ENCODE measurements at regions of chr19 and their contacts with region 1.

Region 1: GRCh38 chr19:37172368-37173366 is at the start of gene ZNF585A:
- DNase-seq: peak; percentile 86 to 97
- ATAC-seq: peak; percentile 98 to 99 (median 99)
- H3K4me3 ChIP-seq: peak within 1 kb of the TSS; percentile 71
- H3K4me3 Mint-ChIP-seq: no peak within 1 kb of the TSS
- H3K27ac ChIP-seq: peak within 1 kb of the TSS; percentile 79
- H3K27ac Mint-ChIP-seq: no peak within 1 kb of the TSS
- H3K4me1 ChIP-seq: peaks cover 2% of the 10 kb centered on the region
- H3K4me1 Mint-ChIP-seq: peaks cover 0 to 4% of the 10 kb centered on the region in 2 donors
- H3K27me3 ChIP-seq: no peaks in the 10 kb centered on the region
- H3K27me3 Mint-ChIP-seq: no peaks in the 10 kb centered on the region
- CTCF ChIP-seq: no peak
- total RNA-seq, gene ZNF585A: 8.9 to 12.6 (median 9.9) TPM

Region 2: DNA sequence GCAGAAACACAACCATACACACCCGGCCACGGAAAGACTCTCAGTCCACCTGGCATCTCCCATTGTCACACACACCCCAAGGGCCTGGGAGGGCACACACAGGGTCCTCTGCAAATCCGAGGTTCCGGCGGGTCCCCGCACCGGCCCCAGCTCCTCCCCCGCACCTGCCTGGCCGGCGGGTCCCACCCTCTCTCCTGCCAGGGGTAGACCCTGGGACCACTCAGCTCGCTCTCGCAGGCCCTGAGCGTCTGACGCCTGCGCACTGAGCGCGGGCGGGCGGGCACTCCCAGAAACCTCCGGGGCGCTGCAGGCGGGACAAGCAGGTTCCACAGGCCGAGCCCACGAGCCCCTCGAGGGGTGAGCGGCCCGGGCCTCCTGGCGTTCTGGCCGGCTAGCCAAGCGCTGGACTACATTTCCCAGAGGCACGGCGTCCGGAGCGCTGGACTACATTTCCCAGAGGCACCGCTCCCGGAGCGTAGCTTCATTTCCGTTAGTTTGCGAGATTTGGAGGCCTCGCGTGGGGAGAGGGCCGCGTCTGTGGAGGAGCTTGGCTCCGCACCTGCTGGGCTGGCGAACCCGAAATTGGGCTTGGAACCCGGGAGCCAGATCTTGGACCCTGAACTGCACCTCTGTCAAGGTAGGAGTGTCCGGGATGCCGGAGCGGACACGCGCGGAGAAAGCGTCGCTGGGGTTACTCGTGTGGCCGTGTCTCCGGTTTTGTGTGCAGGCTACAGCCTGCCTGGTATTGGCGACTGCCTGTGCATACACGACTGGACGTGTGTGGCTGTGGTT is 94.5 kb before region 1 on chr19 and contains the start of gene ZNF420:
- intact Hi-C with region 1: loop called (anchors 1 kb)
- DNase-seq: peak; percentile 82 to 94
- ATAC-seq: peak; percentile 90 to 96 (median 93)
- H3K4me3 ChIP-seq: peak within 1 kb of the TSS; percentile 83
- H3K4me3 Mint-ChIP-seq: peak within 1 kb of the TSS; percentile 100
- H3K27ac ChIP-seq: peak within 1 kb of the TSS; percentile 77
- H3K27ac Mint-ChIP-seq: peak within 1 kb of the TSS; percentile 96 to 97
- H3K4me1 ChIP-seq: peaks cover 8% of the 10 kb centered on the region
- H3K4me1 Mint-ChIP-seq: peaks cover 32 to 37% of the 10 kb centered on the region in 2 donors
- H3K27me3 ChIP-seq: no peaks in the 10 kb centered on the region
- H3K27me3 Mint-ChIP-seq: no peaks in the 10 kb centered on the region
- CTCF ChIP-seq: no peak
- total RNA-seq, gene ZNF420: 6.4 to 15.6 (median 10.2) TPM